ENCODE measurements at regions of chr17 and their contacts with region 1.

Region 1: GRCh38 chr17:21511363-21512198 is 135.4 kb downstream of the KCNJ12 start:
- DNase-seq: peak; percentile 38 to 82 (median 56)
- ATAC-seq: peak; percentile 74
- H3K4me3 ChIP-seq: peak overlapping the region; percentile 58
- H3K4me3 Mint-ChIP-seq: peak overlapping the region; percentile 76
- H3K27ac ChIP-seq: no peak overlapping the region
- H3K27ac Mint-ChIP-seq: no peak overlapping the region
- H3K4me1 ChIP-seq: peaks cover 19% of the 10 kb centered on the region
- H3K4me1 Mint-ChIP-seq: peaks cover 15% of the 10 kb centered on the region
- H3K27me3 ChIP-seq: peaks cover 9 to 17% of the 10 kb centered on the region in 2 experiments
- H3K27me3 Mint-ChIP-seq: peaks cover 43% of the 10 kb centered on the region
- CTCF ChIP-seq: peak; percentile 71

Region 2: DNA sequence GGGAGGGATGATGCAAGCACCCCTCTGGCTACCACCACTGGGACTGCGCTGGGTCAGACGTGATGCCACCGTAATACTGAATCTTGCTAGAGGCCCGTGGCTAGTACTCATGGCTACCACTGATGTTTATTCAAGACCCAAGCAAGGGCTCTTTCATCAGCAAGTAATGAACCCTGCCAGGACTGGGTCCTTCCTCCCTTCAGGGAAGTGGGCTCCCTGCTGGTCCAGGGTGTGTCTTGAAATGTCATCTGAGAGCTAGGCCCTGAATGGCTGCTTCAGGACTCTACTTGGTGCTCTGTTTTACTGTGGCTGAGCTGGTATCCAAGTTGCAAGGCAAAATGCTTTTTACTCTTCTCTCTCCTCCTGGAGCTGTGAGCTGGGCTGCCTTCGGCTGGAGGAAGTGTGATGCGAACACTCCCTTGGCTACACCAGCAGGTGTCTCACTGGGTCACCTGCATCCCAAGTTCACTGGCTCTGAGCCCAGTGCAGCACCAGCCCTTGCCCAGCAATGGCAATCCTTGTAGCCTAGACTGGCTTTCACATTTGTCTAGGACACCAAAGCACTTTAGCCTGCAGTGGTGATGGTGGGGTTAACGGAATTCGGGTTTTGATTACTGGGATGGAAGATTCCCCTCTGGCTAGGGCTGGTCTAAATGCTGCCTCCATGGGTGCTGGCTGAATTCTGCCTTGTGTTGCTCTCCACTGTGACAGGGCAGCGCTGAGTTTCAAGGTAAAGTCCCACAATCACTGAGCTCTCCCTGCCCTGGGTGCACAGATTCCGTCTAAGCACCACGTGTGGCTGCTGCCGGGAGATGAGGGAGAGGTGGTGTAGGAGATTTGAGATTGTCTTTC is 567.3 kb before region 1 on chr17:
- CTCF ChIA-PET with region 1: no interaction called
- POLR2A ChIA-PET with region 1: no interaction called
- intact Hi-C with region 1: loop called (anchors 5 to 10 kb)
- DNase-seq: peak in 7 of 14 experiments; percentile 3 to 52 (median 23)
- ATAC-seq: peak; percentile 54
- H3K4me3 ChIP-seq: no peak overlapping the region
- H3K4me3 Mint-ChIP-seq: no peak overlapping the region
- H3K27ac ChIP-seq: no peak overlapping the region
- H3K27ac Mint-ChIP-seq: no peak overlapping the region
- H3K4me1 ChIP-seq: no peaks in the 10 kb centered on the region
- H3K4me1 Mint-ChIP-seq: no peaks in the 10 kb centered on the region
- H3K27me3 ChIP-seq: peaks cover 0 to 3% of the 10 kb centered on the region in 2 experiments
- H3K27me3 Mint-ChIP-seq: peaks cover 8% of the 10 kb centered on the region
- CTCF ChIP-seq: no peak

Region 3: GRCh38 chr17:21119247-21119918 is 392.2 kb before region 1 on chr17:
- CTCF ChIA-PET with region 1: interaction called, 19 read pairs
- POLR2A ChIA-PET with region 1: interaction called, 7 read pairs
- intact Hi-C with region 1: loop called (anchors 1 kb)
- DNase-seq: peak; percentile 52 to 88 (median 63)
- ATAC-seq: peak; percentile 98
- H3K4me3 ChIP-seq: no peak overlapping the region
- H3K4me3 Mint-ChIP-seq: no peak overlapping the region
- H3K27ac ChIP-seq: no peak overlapping the region
- H3K27ac Mint-ChIP-seq: no peak overlapping the region
- H3K4me1 ChIP-seq: peaks cover 4% of the 10 kb centered on the region
- H3K4me1 Mint-ChIP-seq: peaks cover 10% of the 10 kb centered on the region
- H3K27me3 ChIP-seq: no peaks in the 10 kb centered on the region
- H3K27me3 Mint-ChIP-seq: peaks cover 4% of the 10 kb centered on the region
- CTCF ChIP-seq: peak; percentile 80

Region 4: GRCh38 chr17:21275579-21276263 is 235.9 kb before region 1 on chr17:
- CTCF ChIA-PET with region 1: interaction called, 28 read pairs
- POLR2A ChIA-PET with region 1: interaction called, 3 read pairs
- intact Hi-C with region 1: loop called (anchors 1 kb)
- DNase-seq: peak; percentile 80 to 98 (median 93)
- ATAC-seq: peak; percentile 72
- H3K4me3 ChIP-seq: peak overlapping the region; percentile 57
- H3K4me3 Mint-ChIP-seq: peak overlapping the region; percentile 94
- H3K27ac ChIP-seq: peak overlapping the region; percentile 45 to 83
- H3K27ac Mint-ChIP-seq: peak overlapping the region; percentile 72
- H3K4me1 ChIP-seq: peaks cover 54% of the 10 kb centered on the region
- H3K4me1 Mint-ChIP-seq: peaks cover 47% of the 10 kb centered on the region
- H3K27me3 ChIP-seq: no peaks in the 10 kb centered on the region
- H3K27me3 Mint-ChIP-seq: no peaks in the 10 kb centered on the region
- CTCF ChIP-seq: no peak

Region 5: DNA sequence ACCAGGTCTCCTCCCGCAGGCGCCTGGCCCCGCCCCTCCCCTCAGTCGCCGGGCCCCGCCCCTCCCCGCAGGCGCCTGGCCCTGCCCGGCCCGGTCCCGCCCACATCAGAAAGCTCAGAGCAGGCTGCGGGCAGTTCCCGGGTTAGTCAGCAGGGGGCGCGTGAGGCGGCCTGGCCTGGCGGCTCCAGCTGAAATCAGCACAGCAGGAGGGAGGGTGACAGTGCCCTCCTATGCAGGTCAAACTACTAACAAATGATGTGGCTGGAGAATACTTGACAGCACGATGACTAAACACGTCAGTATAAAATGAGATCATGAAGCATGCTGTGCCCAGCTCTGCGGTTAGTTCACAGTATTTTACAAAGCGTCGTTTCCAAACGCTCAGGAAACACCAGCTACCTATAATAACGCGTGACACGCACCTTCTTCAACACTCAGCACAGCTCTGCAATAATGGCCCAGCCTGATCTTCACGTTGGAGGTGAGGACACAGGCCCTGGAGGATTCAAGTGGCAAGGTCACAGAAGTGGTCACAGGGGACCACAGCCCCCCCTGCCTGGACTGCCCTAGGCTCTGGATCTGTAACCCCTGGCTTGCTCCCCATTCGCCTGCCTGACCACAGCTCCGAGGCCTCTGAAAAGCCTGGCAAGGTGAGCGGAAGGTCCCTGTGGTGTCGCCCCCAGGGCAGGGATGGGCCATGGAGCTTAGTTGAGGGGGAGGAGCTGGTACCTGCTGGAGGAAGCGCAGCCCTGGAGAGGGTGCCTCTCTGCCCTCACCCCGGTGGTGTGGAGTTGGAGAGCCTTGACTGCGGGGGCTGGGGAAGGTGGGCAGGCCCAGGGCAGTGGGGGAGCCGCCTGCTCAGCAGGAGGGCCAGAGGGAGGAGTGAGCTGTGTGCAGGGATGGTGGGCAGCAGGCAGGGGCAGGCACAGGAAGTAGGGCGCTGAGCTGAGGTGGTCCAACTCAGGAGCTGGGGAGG is 54.2 kb before region 1 on chr17:
- CTCF ChIA-PET with region 1: interaction called, 55 read pairs
- POLR2A ChIA-PET with region 1: interaction called, 4 read pairs
- intact Hi-C with region 1: loop called (anchors 1 kb)
- DNase-seq: peak; percentile 85 to 96 (median 90)
- ATAC-seq: peak; percentile 87
- H3K4me3 ChIP-seq: no peak overlapping the region
- H3K4me3 Mint-ChIP-seq: no peak overlapping the region
- H3K27ac ChIP-seq: no peak overlapping the region
- H3K27ac Mint-ChIP-seq: peak overlapping the region; percentile 54
- H3K4me1 ChIP-seq: peaks cover 12% of the 10 kb centered on the region
- H3K4me1 Mint-ChIP-seq: peaks cover 18% of the 10 kb centered on the region
- H3K27me3 ChIP-seq: peaks cover 0 to 2% of the 10 kb centered on the region in 2 experiments
- H3K27me3 Mint-ChIP-seq: peaks cover 25% of the 10 kb centered on the region
- CTCF ChIP-seq: peak; percentile 92

Region 6: DNA sequence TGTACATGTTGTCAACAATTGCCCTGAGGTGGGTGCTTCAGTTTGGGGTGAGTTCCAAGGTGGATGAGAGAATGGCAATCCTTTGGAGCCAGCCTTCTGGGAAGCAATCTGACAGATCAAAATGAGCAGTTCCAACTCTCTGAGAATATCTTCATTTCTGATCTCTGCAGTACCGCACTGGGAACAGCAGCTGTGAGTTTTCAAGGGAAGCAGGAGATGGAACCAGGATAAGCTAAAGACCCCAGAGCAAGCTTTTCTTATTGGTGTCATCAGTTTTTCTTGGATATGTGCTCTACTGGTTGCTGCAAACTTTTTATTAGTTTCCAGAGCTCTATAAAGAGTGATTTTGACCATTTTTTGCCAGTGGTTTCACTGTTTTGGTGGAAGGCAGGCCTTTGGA is 40.7 kb before region 1 on chr17:
- CTCF ChIA-PET with region 1: no interaction called
- POLR2A ChIA-PET with region 1: no interaction called
- intact Hi-C with region 1: no loop called
- DNase-seq: no peak
- ATAC-seq: no peak
- H3K4me3 ChIP-seq: no peak overlapping the region
- H3K4me3 Mint-ChIP-seq: no peak overlapping the region
- H3K27ac ChIP-seq: no peak overlapping the region
- H3K27ac Mint-ChIP-seq: no peak overlapping the region
- H3K4me1 ChIP-seq: no peaks in the 10 kb centered on the region
- H3K4me1 Mint-ChIP-seq: no peaks in the 10 kb centered on the region
- H3K27me3 ChIP-seq: no peaks in the 10 kb centered on the region
- H3K27me3 Mint-ChIP-seq: peaks cover 16% of the 10 kb centered on the region
- CTCF ChIP-seq: no peak